ENCODE measurements at regions of chrX and their contacts with region 1.

Region 1: GRCh38 chrX:79270401-79270800 is 96.7 kb downstream of the ITM2A start:
- DNase-seq: peak; percentile 37
- ATAC-seq: peak; percentile 95
- H3K4me3 Mint-ChIP-seq: no peak overlapping the region
- H3K27ac Mint-ChIP-seq: peak overlapping the region; percentile 79
- H3K4me1 Mint-ChIP-seq: peaks cover 37% of the 10 kb centered on the region
- H3K27me3 Mint-ChIP-seq: no peaks in the 10 kb centered on the region
- CTCF ChIP-seq: no peak

Region 2: GRCh38 chrX:78119521-78120227 is 1150.7 kb before region 1 on chrX:
- CTCF ChIA-PET with region 1: no interaction called
- POLR2A ChIA-PET with region 1: no interaction called
- intact Hi-C with region 1: loop called (anchors 1 kb)
- DNase-seq: no peak
- ATAC-seq: no peak
- H3K4me3 Mint-ChIP-seq: no peak overlapping the region
- H3K27ac Mint-ChIP-seq: peak overlapping the region; percentile 32
- H3K4me1 Mint-ChIP-seq: peaks cover 19% of the 10 kb centered on the region
- H3K27me3 Mint-ChIP-seq: no peaks in the 10 kb centered on the region
- CTCF ChIP-seq: no peak

Region 3: GRCh38 chrX:78754917-78755316 is 515.5 kb before region 1 on chrX:
- CTCF ChIA-PET with region 1: no interaction called
- POLR2A ChIA-PET with region 1: no interaction called
- intact Hi-C with region 1: loop called (anchors 1 kb)
- DNase-seq: no peak
- ATAC-seq: peak; percentile 85
- H3K4me3 Mint-ChIP-seq: peak overlapping the region; percentile 56
- H3K27ac Mint-ChIP-seq: peak overlapping the region; percentile 73
- H3K4me1 Mint-ChIP-seq: peaks cover 45% of the 10 kb centered on the region
- H3K27me3 Mint-ChIP-seq: no peaks in the 10 kb centered on the region
- CTCF ChIP-seq: no peak

Region 4: GRCh38 chrX:79081895-79082512 is 188.4 kb before region 1 on chrX:
- CTCF ChIA-PET with region 1: interaction called, 19 read pairs
- POLR2A ChIA-PET with region 1: interaction called, 4 read pairs
- intact Hi-C with region 1: loop called (anchors 1 kb)
- DNase-seq: no peak
- ATAC-seq: peak; percentile 77
- H3K4me3 Mint-ChIP-seq: peak overlapping the region; percentile 0
- H3K27ac Mint-ChIP-seq: peak overlapping the region; percentile 77
- H3K4me1 Mint-ChIP-seq: peaks cover 12% of the 10 kb centered on the region
- H3K27me3 Mint-ChIP-seq: no peaks in the 10 kb centered on the region
- CTCF ChIP-seq: no peak

Region 5: DNA sequence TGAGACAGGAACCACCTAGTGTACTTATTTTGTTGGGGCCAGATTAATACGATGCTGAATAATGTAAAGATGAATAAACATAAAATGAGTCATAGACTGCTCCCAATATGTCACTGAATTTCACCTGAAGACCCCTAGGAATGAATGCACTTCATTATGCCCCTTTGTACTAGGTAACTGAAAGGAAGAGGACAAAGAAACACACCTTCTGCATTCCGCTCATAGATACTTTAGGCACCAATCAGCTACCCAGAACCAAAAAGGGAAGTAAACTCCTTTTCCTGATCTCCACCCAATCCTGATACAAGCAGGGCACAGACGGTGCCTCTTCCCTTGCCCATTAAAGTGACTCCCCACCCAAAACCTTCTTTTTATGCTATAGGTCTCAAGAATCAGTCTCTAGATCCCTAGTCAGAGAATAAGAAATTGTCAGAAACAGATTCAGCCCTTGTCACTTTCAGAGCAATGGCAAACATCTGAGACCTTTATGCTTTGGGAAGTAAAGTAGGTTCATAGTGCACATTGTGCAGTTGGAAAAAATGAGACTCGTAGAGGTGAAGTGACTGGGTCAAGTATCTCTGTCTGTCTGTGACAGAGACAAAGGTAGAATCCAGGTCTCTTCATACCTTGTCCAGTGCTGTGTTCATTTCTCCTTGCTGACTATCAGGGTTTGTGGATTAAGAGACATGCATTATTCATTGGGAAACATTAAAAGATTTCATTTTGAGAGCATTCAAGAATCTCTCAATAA is 123.6 kb before region 1 on chrX:
- CTCF ChIA-PET with region 1: interaction called, 3 read pairs
- POLR2A ChIA-PET with region 1: interaction called, 3 read pairs
- intact Hi-C with region 1: loop called (anchors 1 kb)
- DNase-seq: no peak
- ATAC-seq: peak; percentile 67
- H3K4me3 Mint-ChIP-seq: peak overlapping the region; percentile 90
- H3K27ac Mint-ChIP-seq: peak overlapping the region; percentile 94
- H3K4me1 Mint-ChIP-seq: peaks cover 59% of the 10 kb centered on the region
- H3K27me3 Mint-ChIP-seq: no peaks in the 10 kb centered on the region
- CTCF ChIP-seq: no peak